Activated T-helper 1 cell treated with anti-CD3 and anti-CD28 coated beads, Interleukin-12 subunit alpha, Interleukin-12 subunit beta, Interleukin-2, Interleukin-4 antibody, amounts not matched to agents 30 ng/mL and 10 ng/mL and 1 ng/mL, durations not matched to agents 14 hours and 24 hours and 36 hours (primary cell): ENCODE measurements at regions of chr9 and their contacts with region 1.

Region 1: DNA sequence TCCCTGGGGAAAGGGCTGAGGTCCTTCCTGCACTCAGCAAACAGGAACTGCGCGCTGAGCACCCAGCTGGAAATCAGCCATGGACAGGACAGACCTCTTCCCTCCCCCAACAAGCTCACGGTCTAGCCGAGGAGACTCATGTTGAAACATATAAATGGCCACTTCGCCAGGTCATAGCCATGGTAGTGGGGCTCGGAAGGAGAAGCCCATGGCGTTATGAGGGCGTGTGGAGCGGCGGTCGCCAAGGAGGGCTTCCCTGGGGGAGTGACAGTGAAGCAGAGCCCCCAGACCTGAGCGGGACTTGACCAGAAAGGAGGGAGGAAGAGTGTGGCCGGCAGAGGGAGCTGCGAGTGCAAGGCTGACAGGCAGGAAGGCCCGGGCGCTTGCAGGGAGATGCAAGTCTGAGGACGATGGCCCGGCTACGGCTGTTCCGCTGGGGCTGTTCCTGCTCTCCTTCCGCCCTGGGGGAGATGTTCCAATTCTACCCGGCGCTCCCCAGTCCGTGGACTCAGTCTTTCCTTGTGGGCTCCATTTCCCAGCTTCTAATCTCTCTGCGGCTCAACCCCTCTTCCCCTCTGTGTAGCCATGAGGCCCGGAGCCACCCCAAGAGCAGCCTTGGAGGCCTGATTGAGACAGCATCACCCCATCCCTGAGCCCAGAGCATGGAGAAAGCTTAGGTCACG is 43.9 kb upstream of the PRRC2B start:
- DNase-seq: peak; percentile 78
- H3K4me3 Mint-ChIP-seq: peak overlapping the region; percentile 54
- H3K27ac Mint-ChIP-seq: no peak overlapping the region
- H3K4me1 Mint-ChIP-seq: peaks cover 9% of the 10 kb centered on the region
- H3K27me3 Mint-ChIP-seq: peaks cover 10% of the 10 kb centered on the region

Region 2: GRCh38 chr9:131418143-131419028 is 68.4 kb after region 1 on chr9:
- intact Hi-C with region 1: loop called (anchors 2 kb)
- DNase-seq: no peak
- H3K4me3 Mint-ChIP-seq: peak overlapping the region; percentile 77
- H3K27ac Mint-ChIP-seq: peak overlapping the region; percentile 91
- H3K4me1 Mint-ChIP-seq: peaks cover 73% of the 10 kb centered on the region
- H3K27me3 Mint-ChIP-seq: no peaks in the 10 kb centered on the region

Region 3: DNA sequence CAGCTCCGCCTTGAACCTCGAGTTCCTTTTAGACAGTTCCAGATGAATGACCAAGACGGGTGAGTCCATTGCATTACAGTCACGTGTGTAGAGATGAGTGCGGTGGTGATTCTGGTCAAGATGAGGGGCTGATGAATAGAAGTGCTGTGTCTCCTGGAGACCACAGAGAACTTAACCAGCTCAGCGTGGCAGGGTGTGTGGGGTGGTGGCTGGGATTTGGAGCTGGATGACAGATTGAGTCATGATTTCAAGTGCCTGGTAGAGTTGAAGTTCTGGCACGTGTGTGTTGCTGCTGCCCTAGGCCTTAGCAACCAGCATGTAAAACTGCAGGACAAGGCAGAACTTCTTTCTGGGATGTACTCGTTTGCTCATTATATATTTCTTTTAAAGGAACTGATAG is 97.1 kb after region 1 on chr9:
- intact Hi-C with region 1: no loop called
- DNase-seq: no peak
- H3K4me3 Mint-ChIP-seq: no peak overlapping the region
- H3K27ac Mint-ChIP-seq: peak overlapping the region; percentile 45
- H3K4me1 Mint-ChIP-seq: peaks cover 14% of the 10 kb centered on the region
- H3K27me3 Mint-ChIP-seq: no peaks in the 10 kb centered on the region

Region 4: DNA sequence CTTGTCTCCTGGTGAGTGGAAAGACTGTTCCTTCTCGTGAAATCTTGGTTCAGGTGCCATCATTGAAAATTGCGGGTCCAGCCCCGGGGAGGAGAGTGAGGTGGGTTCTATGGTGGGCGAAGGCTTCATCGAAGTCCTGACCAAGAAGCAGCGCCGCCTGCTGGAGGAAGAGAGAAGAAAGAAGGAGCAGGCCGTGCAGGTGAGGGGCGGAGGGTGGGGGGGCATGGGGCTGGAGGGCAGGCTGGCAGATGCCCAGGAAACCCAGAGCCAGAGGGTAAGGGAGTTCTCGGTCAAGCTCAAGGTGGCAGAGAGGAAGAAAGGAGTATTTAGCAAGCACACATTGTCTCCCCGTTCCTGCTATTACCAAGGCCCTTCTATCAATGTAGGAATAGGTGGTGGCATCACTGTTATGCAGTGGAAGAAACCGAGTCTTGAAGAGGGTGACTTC is 128.4 kb after region 1 on chr9:
- intact Hi-C with region 1: loop called (anchors 1 kb)
- DNase-seq: peak; percentile 27
- H3K4me3 Mint-ChIP-seq: no peak overlapping the region
- H3K27ac Mint-ChIP-seq: peak overlapping the region; percentile 13
- H3K4me1 Mint-ChIP-seq: no peaks in the 10 kb centered on the region
- H3K27me3 Mint-ChIP-seq: no peaks in the 10 kb centered on the region

Region 5: DNA sequence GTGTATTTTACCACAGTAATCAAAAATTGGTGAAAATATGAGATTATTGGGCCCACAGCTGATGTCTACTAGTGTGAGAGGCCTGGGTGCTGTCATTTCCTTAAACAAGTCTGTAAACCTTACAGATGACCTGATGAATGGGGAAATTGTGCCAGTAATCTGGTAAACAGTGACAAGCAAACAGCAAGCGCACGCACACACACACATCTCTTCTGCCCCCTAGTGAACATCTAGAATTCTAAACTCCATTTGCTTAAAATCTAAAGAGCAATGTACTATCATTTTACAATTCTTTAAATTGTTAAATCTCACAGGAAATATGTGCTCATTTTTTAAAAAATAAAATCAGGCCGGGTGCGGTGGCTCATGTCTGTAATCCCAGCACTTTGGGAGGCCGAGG is 397.3 kb after region 1 on chr9:
- intact Hi-C with region 1: loop called (anchors 1 kb)
- DNase-seq: no peak
- H3K4me3 Mint-ChIP-seq: no peak overlapping the region
- H3K27ac Mint-ChIP-seq: no peak overlapping the region
- H3K4me1 Mint-ChIP-seq: peaks cover 34% of the 10 kb centered on the region
- H3K27me3 Mint-ChIP-seq: peaks cover 5% of the 10 kb centered on the region